CD8-positive, alpha-beta memory T cell (primary cell): ENCODE measurements at regions of chr17 and their contacts with region 1.

Region 1: GRCh38 chr17:21275579-21276263 is 8.8 kb upstream of the MAP2K3 start:
- DNase-seq: peak; percentile 86 to 95 (median 92)
- H3K4me3 ChIP-seq: peak overlapping the region; percentile 66
- H3K4me3 Mint-ChIP-seq: peak overlapping the region; percentile 71 to 92 (median 89)
- H3K27ac ChIP-seq: peak overlapping the region; percentile 60
- H3K27ac Mint-ChIP-seq: peak overlapping the region; percentile 67 to 96 (median 88)
- H3K4me1 ChIP-seq: peaks cover 45% of the 10 kb centered on the region
- H3K4me1 Mint-ChIP-seq: peaks cover 34 to 45% (median 41%) of the 10 kb centered on the region in 3 donors
- H3K27me3 ChIP-seq: no peaks in the 10 kb centered on the region
- H3K27me3 Mint-ChIP-seq: peaks cover 0 to 1% of the 10 kb centered on the region in 2 donors

Region 2: DNA sequence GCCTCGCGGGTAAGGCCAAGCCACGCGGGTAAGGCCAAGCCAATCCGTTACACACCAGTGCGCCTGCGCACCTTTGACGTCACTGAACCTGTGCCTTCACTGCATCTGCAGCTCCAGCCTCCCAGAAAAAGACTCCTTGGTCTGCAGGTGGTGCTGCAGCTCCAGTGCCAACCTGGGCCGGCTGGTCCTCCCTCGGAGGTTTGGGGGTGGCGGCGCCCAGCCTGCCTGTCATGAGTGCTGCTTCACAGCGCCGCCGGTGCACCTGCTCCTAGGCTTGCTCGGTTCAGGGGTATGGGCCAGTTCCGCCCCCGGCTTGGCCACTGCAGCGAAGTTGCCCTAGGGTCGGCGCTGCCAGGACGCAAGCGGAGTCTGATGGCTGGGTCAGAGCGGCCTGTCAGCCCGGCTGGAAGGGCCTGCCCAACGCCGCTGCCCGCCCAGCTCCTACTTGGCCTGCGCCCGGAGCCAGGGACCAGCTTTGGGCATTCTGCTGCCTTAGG is 379.5 kb before region 1 on chr17:
- CTCF ChIA-PET with region 1: no interaction called
- POLR2A ChIA-PET with region 1: no interaction called
- DNase-seq: peak in 4 of 5 donors; percentile 11 to 49 (median 20)
- H3K4me3 ChIP-seq: no peak overlapping the region
- H3K4me3 Mint-ChIP-seq: no peak overlapping the region
- H3K27ac ChIP-seq: no peak overlapping the region
- H3K27ac Mint-ChIP-seq: no peak overlapping the region
- H3K4me1 ChIP-seq: no peaks in the 10 kb centered on the region
- H3K4me1 Mint-ChIP-seq: no peaks in the 10 kb centered on the region
- H3K27me3 ChIP-seq: no peaks in the 10 kb centered on the region
- H3K27me3 Mint-ChIP-seq: peaks cover 4 to 13% of the 10 kb centered on the region in 2 donors

Region 3: DNA sequence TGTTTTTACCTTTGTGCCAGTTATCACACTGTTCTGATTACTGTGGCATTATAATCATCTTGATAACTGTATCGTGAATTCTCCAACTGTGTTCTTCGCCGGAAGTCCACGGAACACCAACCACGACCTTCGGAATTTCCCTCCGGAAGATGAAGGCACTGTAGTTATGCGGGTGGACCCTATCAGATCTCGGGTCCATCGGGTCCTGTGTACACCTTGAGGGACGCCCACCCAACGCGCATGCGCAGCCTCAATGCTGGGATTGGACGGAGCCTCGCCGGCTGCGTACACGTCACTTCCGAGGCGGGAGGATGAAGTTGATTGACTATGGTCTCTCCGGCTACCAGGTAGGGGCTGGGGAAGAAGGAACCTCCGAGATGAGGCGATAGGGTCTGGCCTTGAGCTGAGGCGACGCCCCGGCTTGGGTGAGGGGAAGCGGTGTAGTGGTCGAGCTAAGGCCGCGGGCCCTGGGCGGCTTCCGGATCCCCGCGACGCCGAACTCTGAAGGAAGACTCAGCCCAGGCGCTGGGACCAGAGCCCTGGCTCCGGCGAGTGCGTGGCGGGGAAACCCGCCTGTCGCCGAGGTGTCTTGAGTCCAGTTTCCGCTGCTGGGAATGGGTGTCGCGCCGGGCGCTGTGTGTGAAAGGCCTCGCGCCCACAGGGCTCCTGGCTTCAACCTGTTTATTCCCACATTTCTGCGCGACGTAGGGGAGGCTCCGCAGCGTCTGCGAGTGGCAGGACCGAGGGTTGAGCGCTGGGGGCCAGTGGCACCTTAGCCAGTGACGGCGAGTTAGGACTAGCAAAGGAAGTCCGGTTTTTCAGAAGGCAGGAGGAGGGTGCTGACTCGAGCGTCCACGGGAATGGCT is 148.8 kb before region 1 on chr17 and contains the start of gene DHRS7B:
- CTCF ChIA-PET with region 1: interaction called, 12 read pairs
- POLR2A ChIA-PET with region 1: interaction called, 5 read pairs
- DNase-seq: peak; percentile 93 to 98 (median 95)
- H3K4me3 ChIP-seq: peak within 1 kb of the TSS; percentile 88
- H3K4me3 Mint-ChIP-seq: peak within 1 kb of the TSS; percentile 89 to 98 (median 95)
- H3K27ac ChIP-seq: peak within 1 kb of the TSS; percentile 89
- H3K27ac Mint-ChIP-seq: peak within 1 kb of the TSS; percentile 93 to 99 (median 96)
- H3K4me1 ChIP-seq: peaks cover 24% of the 10 kb centered on the region
- H3K4me1 Mint-ChIP-seq: peaks cover 29 to 34% (median 33%) of the 10 kb centered on the region in 3 donors
- H3K27me3 ChIP-seq: no peaks in the 10 kb centered on the region
- H3K27me3 Mint-ChIP-seq: no peaks in the 10 kb centered on the region
- total RNA-seq, gene DHRS7B: 25.7 to 27.5 TPM